Astrocyte of the cerebellum (primary cell): ENCODE measurements at regions of chr3 and their contacts with region 1.

Region 1: GRCh38 chr3:45507820-45508317 is 86.7 kb upstream of the LIMD1 start:
- DNase-seq: peak; percentile 67
- H3K4me3 ChIP-seq: no peak overlapping the region
- CTCF ChIP-seq: peak; percentile 82

Region 2: DNA sequence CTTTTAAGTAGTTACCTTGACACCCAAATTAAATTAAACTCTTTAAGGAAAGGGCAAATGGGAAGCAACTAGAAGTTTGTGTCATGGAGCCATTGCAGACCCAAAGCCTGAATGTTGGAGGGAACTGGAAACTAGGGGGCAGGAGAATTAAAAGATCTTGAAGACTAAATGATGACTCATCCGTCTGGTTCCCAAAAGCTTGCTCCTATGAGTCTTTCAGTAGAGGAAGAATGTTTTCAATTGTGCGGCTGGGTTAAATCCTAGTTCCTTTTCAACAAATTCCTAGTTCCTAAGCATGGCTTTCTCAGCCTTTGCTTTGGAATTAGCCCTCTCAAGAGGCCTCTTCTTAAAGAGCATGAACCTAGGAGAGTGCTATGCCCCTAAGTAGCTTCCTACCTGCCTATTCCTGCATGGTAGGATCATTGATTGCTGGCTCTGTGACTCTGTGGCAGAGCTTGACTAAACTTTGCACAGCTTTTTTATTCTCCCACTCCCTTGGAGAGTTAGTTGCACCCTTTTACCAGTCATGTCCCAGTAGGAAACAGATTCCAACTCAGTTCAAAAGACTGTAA is 464.1 kb before region 1 on chr3:
- in situ Hi-C with region 1: loop called (anchors 5 kb)
- DNase-seq: peak; percentile 76
- H3K4me3 ChIP-seq: no peak overlapping the region
- CTCF ChIP-seq: peak; percentile 43

Region 3: DNA sequence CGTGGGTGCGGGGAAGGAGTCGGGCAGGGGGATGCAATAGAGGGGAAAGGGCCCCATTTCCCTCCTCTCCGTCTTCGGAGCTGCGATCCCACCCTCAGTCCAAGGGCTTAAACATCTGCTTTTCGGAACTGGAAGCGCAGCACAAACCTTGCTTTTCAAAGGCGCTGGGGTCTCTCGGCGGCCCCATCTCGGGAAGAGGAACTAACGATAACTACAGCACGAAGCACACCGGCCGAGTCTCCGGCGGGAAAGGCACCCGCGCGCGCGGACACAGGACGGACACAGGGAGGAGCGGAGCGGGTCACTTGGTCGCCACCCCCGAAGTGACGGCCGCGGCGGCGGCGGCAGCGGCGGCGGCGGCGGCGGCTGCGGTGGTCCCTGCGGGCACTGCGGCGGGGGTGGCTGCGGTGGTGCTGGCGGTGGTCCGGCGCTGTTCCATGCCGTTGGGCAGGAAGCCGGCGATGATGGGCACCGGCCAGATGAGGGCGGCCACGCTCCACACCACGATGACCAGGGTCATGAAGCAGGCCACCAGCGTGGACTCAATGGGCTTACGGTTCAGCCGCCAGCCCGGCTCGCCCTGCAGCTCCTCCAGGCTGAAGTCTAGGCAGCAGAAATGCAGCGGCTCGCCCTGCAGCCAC is 282.9 kb before region 1 on chr3:
- in situ Hi-C with region 1: loop called (anchors 5 kb)
- DNase-seq: no peak
- H3K4me3 ChIP-seq: peak overlapping the region; percentile 46
- CTCF ChIP-seq: peak; percentile 35

Region 4: GRCh38 chr3:45437383-45437782 is 70.5 kb before region 1 on chr3:
- in situ Hi-C with region 1: no loop called
- DNase-seq: no peak
- H3K4me3 ChIP-seq: no peak overlapping the region
- CTCF ChIP-seq: no peak